ENCODE measurements at regions of chr17 and their contacts with region 1.

Region 1: GRCh38 chr17:51764387-51764972 is 394.0 kb downstream of the CA10 start:
- DNase-seq: peak; percentile 4
- ATAC-seq: peak; percentile 96
- H3K4me3 ChIP-seq: no peak overlapping the region
- H3K27ac ChIP-seq: no peak overlapping the region
- H3K4me1 ChIP-seq: no peaks in the 10 kb centered on the region
- H3K27me3 ChIP-seq: no peaks in the 10 kb centered on the region
- CTCF ChIP-seq: peak; percentile 78 to 88 (median 87)
- EP300 ChIP-seq: no peak
- POLR2A ChIP-seq: no peak
- RAD21 ChIP-seq: peak; percentile 85

Region 2: GRCh38 chr17:51748749-51749539 is 15.5 kb before region 1 on chr17:
- CTCF ChIA-PET with region 1: interaction called, 28 read pairs
- POLR2A ChIA-PET with region 1: no interaction called
- RAD21 ChIA-PET with region 1: no interaction called
- SMC1A ChIA-PET with region 1: no interaction called
- in situ Hi-C with region 1: no loop called
- intact Hi-C with region 1: no loop called
- DNase-seq: no peak
- ATAC-seq: no peak
- H3K4me3 ChIP-seq: no peak overlapping the region
- H3K27ac ChIP-seq: no peak overlapping the region
- H3K4me1 ChIP-seq: no peaks in the 10 kb centered on the region
- H3K27me3 ChIP-seq: no peaks in the 10 kb centered on the region; a peak in 1 of 4 replicates
- CTCF ChIP-seq: no peak
- EP300 ChIP-seq: no peak
- POLR2A ChIP-seq: no peak
- RAD21 ChIP-seq: no peak

Region 3: GRCh38 chr17:51793686-51794085 is 29.2 kb after region 1 on chr17:
- CTCF ChIA-PET with region 1: no interaction called
- POLR2A ChIA-PET with region 1: no interaction called
- RAD21 ChIA-PET with region 1: no interaction called
- SMC1A ChIA-PET with region 1: no interaction called
- in situ Hi-C with region 1: no loop called
- intact Hi-C with region 1: no loop called
- DNase-seq: no peak
- ATAC-seq: no peak
- H3K4me3 ChIP-seq: no peak overlapping the region
- H3K27ac ChIP-seq: no peak overlapping the region
- H3K4me1 ChIP-seq: no peaks in the 10 kb centered on the region
- H3K27me3 ChIP-seq: no peaks in the 10 kb centered on the region
- CTCF ChIP-seq: no peak
- EP300 ChIP-seq: no peak
- POLR2A ChIP-seq: no peak
- RAD21 ChIP-seq: no peak

Region 4: GRCh38 chr17:51833620-51834019 is 69.1 kb after region 1 on chr17:
- CTCF ChIA-PET with region 1: no interaction called
- POLR2A ChIA-PET with region 1: no interaction called
- RAD21 ChIA-PET with region 1: no interaction called
- SMC1A ChIA-PET with region 1: no interaction called
- in situ Hi-C with region 1: no loop called
- intact Hi-C with region 1: no loop called
- DNase-seq: no peak
- ATAC-seq: no peak
- H3K4me3 ChIP-seq: no peak overlapping the region
- H3K27ac ChIP-seq: no peak overlapping the region
- H3K4me1 ChIP-seq: no peaks in the 10 kb centered on the region
- H3K27me3 ChIP-seq: no peaks in the 10 kb centered on the region
- CTCF ChIP-seq: no peak
- EP300 ChIP-seq: no peak
- POLR2A ChIP-seq: no peak
- RAD21 ChIP-seq: no peak

Measured in GM12878 (cell line).